ENCODE measurements at regions of chr2 and their contacts with region 1.

Region 1: GRCh38 chr2:32772638-32773447 is 145.0 kb downstream of the TTC27 start:
- DNase-seq: no peak
- ATAC-seq: peak; percentile 77

Region 2: DNA sequence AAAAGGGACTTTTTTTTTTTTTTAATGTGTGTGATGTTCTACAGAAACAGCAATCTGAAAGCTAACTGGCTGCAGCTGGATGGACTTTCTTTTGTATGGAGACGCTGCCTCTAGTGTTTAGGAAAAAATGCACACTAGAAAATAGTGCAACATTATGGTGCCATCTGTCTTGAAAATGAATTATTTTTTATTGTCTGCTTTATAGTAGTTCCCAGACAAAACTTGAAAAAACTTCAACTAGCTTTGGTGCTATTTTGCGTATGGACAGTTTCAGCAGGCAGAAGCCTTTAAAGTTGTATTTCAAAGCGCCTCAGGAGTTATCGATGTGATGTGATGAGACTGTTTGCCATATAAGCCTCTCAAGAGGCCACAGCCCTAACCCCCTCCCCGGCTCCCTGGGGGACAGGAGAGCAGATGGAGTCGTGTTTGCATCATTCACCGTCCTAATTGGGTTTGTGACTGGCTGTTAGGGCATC is 260.8 kb after region 1 on chr2:
- intact Hi-C with region 1: loop called (anchors 2 kb)
- DNase-seq: no peak
- ATAC-seq: peak; percentile 81

Region 3: DNA sequence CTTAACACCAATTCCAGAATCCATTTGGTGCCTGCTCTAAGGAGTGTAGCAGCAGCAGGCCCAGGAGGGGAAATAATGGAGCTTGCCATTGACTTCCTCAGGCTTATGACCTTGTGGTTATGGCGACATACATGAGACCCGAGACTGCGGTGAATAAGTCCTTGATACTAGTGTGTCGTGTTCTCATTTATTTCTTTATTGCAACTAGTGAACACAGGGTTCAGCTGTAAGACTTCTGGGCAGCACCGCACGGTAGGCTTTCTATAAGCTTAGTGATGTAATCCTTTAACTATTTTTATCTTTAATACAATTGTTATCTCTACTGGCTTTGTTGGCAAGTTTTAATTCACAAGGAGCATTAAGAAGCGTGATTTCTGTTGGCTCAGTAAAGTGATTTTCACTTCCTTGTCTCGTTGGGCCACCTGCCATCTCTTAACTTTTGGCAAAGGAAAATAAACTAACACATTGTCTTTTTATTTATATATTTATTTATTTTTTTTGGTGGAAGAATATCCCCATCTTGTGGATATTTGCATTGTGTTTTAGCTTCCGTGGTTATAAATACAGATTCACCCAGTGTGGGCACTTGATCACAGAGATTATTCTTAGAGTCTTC is 313.7 kb after region 1 on chr2:
- intact Hi-C with region 1: loop called (anchors 10 kb)
- DNase-seq: no peak
- ATAC-seq: peak; percentile 52

Region 4: GRCh38 chr2:33267756-33268155 is 494.9 kb after region 1 on chr2:
- intact Hi-C with region 1: loop called (anchors 5 kb)
- DNase-seq: no peak
- ATAC-seq: no peak

Region 5: GRCh38 chr2:33372940-33373553 is 600.2 kb after region 1 on chr2:
- intact Hi-C with region 1: loop called (anchors 10 kb)
- DNase-seq: no peak
- ATAC-seq: no peak

Measured in Right ventricle myocardium superior (tissue), 1 donor.